CD4-positive, alpha-beta T cell (primary cell): ENCODE measurements at regions of chr2 and their contacts with region 1.

Region 1: GRCh38 chr2:196263181-196263747 is 91.9 kb upstream of the STK17B start:
- DNase-seq: peak in 11 of 14 experiments; percentile 14 to 87 (median 42)
- ATAC-seq: peak; percentile 79
- H3K4me3 ChIP-seq: peak overlapping the region; percentile 28
- H3K4me3 Mint-ChIP-seq: peak overlapping the region; percentile 43
- H3K27ac ChIP-seq: peak overlapping the region; percentile 79 to 85
- H3K27ac Mint-ChIP-seq: peak overlapping the region; percentile 84
- H3K4me1 ChIP-seq: peaks cover 48% of the 10 kb centered on the region
- H3K4me1 Mint-ChIP-seq: peaks cover 88% of the 10 kb centered on the region
- H3K27me3 ChIP-seq: no peaks in the 10 kb centered on the region
- H3K27me3 Mint-ChIP-seq: no peaks in the 10 kb centered on the region
- CTCF ChIP-seq: no peak

Region 2: DNA sequence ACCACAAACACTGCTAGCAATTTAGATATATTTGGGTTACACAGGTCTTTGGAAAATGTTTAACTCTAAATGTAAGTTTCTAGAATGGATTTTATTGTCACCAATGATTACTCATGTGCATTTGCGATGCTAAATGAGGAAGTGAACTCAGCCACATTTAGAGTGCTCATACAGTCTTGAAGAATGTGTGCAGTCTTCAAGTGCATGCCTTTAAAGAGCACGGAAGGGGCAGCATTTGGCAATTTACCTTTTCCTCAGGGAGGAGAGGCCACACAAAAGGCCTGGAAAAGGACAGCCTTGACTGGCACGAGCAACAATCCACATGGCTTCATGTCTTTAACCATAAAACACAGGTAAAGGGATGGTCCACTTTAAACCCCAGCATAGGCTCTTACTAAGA is 13.4 kb before region 1 on chr2:
- CTCF ChIA-PET with region 1: no interaction called
- POLR2A ChIA-PET with region 1: interaction called, 72 read pairs
- intact Hi-C with region 1: loop called in 1 of 2 experiments (anchors 2 kb)
- DNase-seq: peak in 2 of 14 experiments; percentile 39 to 44
- ATAC-seq: peak; percentile 64
- H3K4me3 ChIP-seq: no peak overlapping the region
- H3K4me3 Mint-ChIP-seq: peak overlapping the region; percentile 57
- H3K27ac ChIP-seq: no peak overlapping the region
- H3K27ac Mint-ChIP-seq: peak overlapping the region; percentile 60
- H3K4me1 ChIP-seq: peaks cover 38% of the 10 kb centered on the region
- H3K4me1 Mint-ChIP-seq: peaks cover 89% of the 10 kb centered on the region
- H3K27me3 ChIP-seq: no peaks in the 10 kb centered on the region
- H3K27me3 Mint-ChIP-seq: no peaks in the 10 kb centered on the region
- CTCF ChIP-seq: no peak